Heart right ventricle (tissue), 16 donors: ENCODE measurements at regions of chr13 and their contacts with region 1.

Region 1: GRCh38 chr13:61410669-61411297 is 4.9 kb downstream of the PCDH20 start:
- DNase-seq: no peak
- ATAC-seq: no peak
- H3K4me3 ChIP-seq: no peak overlapping the region
- H3K27ac ChIP-seq: no peak overlapping the region
- H3K4me1 ChIP-seq: peaks cover 0 to 4% (median 0%) of the 10 kb centered on the region in 9 donors
- H3K27me3 ChIP-seq: peaks cover 0 to 38% (median 30%) of the 10 kb centered on the region in 7 donors
- CTCF ChIP-seq: peak in 8 of 9 donors; percentile 20 to 58 (median 46)

Region 2: DNA sequence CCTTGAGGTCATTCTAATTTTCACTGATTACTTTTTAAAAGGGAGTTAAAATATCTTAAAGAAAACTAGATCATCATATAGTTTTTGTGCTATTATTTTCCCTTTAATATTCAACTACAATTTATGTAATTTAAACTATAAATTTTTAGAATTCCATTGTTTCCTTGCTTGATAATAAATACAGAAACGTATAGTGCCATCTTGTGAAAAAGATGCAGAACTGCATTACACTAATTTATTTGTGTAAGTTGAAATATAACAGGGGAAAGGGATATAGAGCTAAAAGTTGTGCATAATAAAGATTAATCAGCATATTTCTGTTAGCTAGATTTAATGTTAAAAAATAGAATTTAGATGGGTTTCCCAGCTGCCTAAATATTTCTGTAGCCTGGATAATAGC is 1075.3 kb before region 1 on chr13:
- intact Hi-C with region 1: no loop called
- DNase-seq: no peak
- ATAC-seq: no peak
- H3K4me3 ChIP-seq: no peak overlapping the region
- H3K27ac ChIP-seq: no peak overlapping the region
- H3K4me1 ChIP-seq: no peaks in the 10 kb centered on the region
- H3K27me3 ChIP-seq: peaks cover 0 to 5% (median 0%) of the 10 kb centered on the region in 7 donors
- CTCF ChIP-seq: peak in 8 of 9 donors; percentile 18 to 71 (median 64)

Region 3: GRCh38 chr13:61128850-61129645 is 281.7 kb before region 1 on chr13:
- intact Hi-C with region 1: loop called in 1 of 10 experiments (anchors 10 kb)
- DNase-seq: no peak
- ATAC-seq: no peak
- H3K4me3 ChIP-seq: no peak overlapping the region
- H3K27ac ChIP-seq: no peak overlapping the region
- H3K4me1 ChIP-seq: no peaks in the 10 kb centered on the region
- H3K27me3 ChIP-seq: no peaks in the 10 kb centered on the region
- CTCF ChIP-seq: no peak

Region 4: GRCh38 chr13:61387694-61388093 is 23.1 kb before region 1 on chr13:
- intact Hi-C with region 1: no loop called
- DNase-seq: no peak
- ATAC-seq: no peak
- H3K4me3 ChIP-seq: no peak overlapping the region
- H3K27ac ChIP-seq: no peak overlapping the region
- H3K4me1 ChIP-seq: no peaks in the 10 kb centered on the region
- H3K27me3 ChIP-seq: no peaks in the 10 kb centered on the region
- CTCF ChIP-seq: no peak